Activated CD4-positive, alpha-beta T cell treated with anti-CD3 and anti-CD28 coated beads for 36 hours (primary cell): ENCODE measurements at regions of chr6 and their contacts with region 1.

Region 1: GRCh38 chr6:127855542-127856159 is 45.2 kb downstream of the THEMIS start:
- DNase-seq: peak; percentile 68
- ATAC-seq: peak; percentile 60
- H3K4me3 Mint-ChIP-seq: peak overlapping the region; percentile 39
- H3K27ac Mint-ChIP-seq: peak overlapping the region; percentile 69
- H3K4me1 Mint-ChIP-seq: peaks cover 70% of the 10 kb centered on the region
- H3K27me3 Mint-ChIP-seq: no peaks in the 10 kb centered on the region

Region 2: DNA sequence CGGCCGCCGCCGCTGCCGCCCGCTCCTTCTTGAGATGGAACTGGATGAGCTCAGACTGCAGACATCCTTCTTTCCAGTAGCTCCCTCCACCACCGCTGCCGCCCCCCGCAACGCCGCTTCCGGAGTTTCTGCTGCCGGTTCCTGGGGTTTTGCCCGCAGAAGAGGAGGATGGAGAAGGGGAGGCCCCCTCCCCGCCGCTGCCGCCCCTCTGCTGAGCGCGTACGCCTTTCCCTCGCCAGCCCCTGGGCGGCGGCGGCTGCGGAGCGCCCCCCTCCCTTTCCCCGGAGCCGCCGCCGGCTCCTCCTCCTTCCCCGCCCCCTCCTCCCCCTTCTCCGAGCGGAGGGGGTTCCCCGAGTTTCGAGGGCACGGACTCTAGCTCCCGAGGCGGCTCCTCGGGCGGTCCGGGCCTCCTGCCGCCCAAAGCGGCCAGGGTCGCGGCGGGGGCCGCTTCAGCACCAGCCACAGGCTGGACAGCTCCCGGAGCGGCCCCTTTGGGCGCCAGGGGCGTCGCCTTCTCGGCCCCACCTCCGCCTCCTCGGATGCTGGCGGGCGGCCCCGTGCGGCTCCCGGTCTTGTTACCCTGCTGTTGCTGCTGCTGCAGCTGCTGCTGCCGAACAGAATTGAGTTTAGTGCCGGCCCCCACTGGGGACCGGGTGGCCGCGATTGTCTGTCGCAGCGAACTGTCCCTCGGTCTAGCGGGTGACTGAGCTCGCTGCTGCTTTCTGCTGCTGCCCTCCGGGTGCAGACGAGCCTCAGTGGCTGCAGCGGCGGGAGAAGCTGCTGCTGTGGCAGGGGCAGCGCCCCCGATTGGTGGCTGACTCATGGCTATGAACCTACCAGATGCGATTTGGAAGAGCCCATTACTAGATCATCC is 339.6 kb before region 1 on chr6:
- CTCF ChIA-PET with region 1: no interaction called
- POLR2A ChIA-PET with region 1: no interaction called
- intact Hi-C with region 1: no loop called
- DNase-seq: peak; percentile 79
- ATAC-seq: peak; percentile 73
- H3K4me3 Mint-ChIP-seq: peak overlapping the region; percentile 87
- H3K27ac Mint-ChIP-seq: peak overlapping the region; percentile 58
- H3K4me1 Mint-ChIP-seq: peaks cover 40% of the 10 kb centered on the region
- H3K27me3 Mint-ChIP-seq: peaks cover 43% of the 10 kb centered on the region

Region 3: GRCh38 chr6:127554435-127555006 is 301.1 kb before region 1 on chr6:
- CTCF ChIA-PET with region 1: no interaction called
- POLR2A ChIA-PET with region 1: no interaction called
- intact Hi-C with region 1: no loop called
- DNase-seq: peak; percentile 36
- ATAC-seq: peak; percentile 42
- H3K4me3 Mint-ChIP-seq: no peak overlapping the region
- H3K27ac Mint-ChIP-seq: no peak overlapping the region
- H3K4me1 Mint-ChIP-seq: no peaks in the 10 kb centered on the region
- H3K27me3 Mint-ChIP-seq: peaks cover 26% of the 10 kb centered on the region

Region 4: DNA sequence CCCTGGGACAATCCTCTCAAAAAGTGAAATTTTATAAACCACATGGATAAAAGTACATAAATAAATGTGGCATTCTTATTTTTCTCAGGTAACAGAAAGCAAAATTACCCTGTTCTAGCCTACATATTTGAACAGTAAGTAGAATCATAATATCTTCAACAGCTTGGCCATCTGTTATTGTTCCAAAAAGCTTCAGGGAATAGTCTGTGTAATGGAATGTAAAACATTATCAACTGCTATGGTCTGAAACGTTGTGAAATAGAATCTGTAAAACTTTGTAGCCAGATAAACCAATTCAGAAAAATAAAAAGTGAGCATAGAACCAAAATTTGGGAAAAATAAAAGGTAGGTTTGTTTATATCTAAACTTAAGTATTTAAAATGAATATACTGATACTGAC is 69.5 kb before region 1 on chr6:
- CTCF ChIA-PET with region 1: interaction called, 12 read pairs
- POLR2A ChIA-PET with region 1: no interaction called
- intact Hi-C with region 1: no loop called
- DNase-seq: no peak
- ATAC-seq: no peak
- H3K4me3 Mint-ChIP-seq: no peak overlapping the region
- H3K27ac Mint-ChIP-seq: no peak overlapping the region
- H3K4me1 Mint-ChIP-seq: peaks cover 75% of the 10 kb centered on the region
- H3K27me3 Mint-ChIP-seq: no peaks in the 10 kb centered on the region

Region 5: DNA sequence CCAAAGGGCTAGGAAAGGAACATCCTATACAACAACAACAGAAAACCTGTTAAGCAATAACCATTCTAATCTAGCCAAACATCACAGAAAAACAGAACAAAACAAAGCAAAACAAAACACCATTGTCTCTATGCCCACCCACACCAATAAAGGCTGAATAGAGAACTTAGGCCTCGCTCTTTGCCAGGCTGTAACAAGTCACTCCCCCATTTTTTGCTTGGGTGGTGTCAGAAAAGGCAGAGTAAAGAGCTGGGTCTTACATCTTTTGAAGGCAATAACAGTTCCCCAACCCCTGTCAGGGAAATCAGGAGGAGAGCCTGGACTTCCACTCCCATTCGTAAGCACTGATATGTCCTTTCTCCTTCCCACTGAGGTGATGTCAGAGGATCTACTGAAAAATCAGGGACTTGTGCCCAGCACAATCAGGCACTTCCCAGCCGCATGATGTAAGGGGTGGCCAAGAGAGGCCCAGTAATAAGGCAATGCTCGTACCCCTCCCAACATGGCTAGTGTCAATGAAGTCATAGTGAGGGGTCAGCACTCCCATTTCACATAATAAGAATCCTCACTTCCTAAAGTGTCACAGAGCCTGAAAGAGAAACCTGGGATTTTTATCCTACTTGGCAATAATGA is 14.2 kb after region 1 on chr6:
- CTCF ChIA-PET with region 1: interaction called, 34 read pairs
- POLR2A ChIA-PET with region 1: interaction called, 3 read pairs
- intact Hi-C with region 1: no loop called
- DNase-seq: no peak
- ATAC-seq: peak; percentile 45
- H3K4me3 Mint-ChIP-seq: peak overlapping the region; percentile 3
- H3K27ac Mint-ChIP-seq: peak overlapping the region; percentile 74
- H3K4me1 Mint-ChIP-seq: peaks cover 56% of the 10 kb centered on the region
- H3K27me3 Mint-ChIP-seq: no peaks in the 10 kb centered on the region

Region 6: DNA sequence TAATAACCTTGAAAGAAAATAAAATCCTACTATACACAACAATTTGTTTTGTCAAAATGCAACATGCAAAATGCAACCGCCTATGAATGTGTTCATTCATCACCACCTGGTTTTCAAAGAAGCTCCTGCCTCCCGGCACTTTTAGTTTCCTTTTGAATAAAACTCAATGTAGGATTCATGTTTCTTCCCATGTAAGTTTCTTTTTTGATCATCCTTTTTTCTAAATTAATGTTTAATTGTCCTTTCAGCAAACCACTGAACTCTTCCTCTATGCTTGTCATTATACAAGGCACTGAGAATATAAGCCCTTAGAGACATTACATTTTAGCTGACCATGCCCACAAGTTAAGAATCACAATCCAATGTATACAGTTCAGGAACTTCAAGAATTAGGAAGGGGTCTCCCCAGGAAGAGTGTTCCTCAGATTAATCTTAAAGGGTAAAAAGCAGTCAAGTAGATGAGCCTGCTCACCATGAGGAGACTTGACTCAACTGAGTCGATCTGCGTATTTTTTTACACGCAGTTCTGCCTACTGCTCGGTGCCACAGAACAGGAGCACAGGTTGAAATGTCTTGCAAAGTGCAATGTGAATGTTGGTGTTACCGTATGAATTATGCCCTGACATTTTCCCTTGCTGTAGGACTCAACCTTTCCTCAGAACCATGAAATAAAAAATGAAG is 52.4 kb after region 1 on chr6:
- CTCF ChIA-PET with region 1: interaction called, 15 read pairs
- POLR2A ChIA-PET with region 1: no interaction called
- intact Hi-C with region 1: no loop called
- DNase-seq: peak; percentile 61
- ATAC-seq: peak; percentile 83
- H3K4me3 Mint-ChIP-seq: peak overlapping the region; percentile 61
- H3K27ac Mint-ChIP-seq: peak overlapping the region; percentile 84
- H3K4me1 Mint-ChIP-seq: peaks cover 55% of the 10 kb centered on the region
- H3K27me3 Mint-ChIP-seq: no peaks in the 10 kb centered on the region

Region 7: DNA sequence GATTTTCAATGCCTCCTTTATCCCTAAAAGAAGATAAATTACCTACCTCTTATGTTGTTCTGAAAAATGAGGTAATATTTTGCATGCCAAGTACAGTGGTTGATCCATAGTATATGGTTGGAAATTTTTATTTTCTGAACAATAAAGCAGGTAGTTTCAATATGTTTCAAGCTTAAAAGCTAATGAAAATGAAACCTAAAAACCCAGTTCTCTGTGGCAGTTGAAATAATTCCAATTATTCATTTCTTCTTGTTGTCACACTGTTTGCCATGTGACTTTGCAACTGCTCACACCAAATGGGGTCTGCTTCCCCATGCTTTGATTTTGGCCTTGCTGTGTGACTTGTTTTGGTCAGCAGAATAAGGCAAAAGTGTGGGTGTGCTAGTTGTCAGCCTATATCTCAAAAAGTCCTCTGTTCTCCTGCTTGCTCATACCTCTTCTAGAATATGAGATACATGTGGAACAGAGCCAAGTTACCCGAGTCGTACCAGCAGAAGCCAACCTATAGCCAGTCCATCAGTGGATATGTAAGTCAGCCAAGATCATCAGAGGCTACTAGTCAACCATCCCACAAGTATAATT is 242.4 kb after region 1 on chr6:
- CTCF ChIA-PET with region 1: interaction called, 7 read pairs
- POLR2A ChIA-PET with region 1: no interaction called
- intact Hi-C with region 1: loop called (anchors 10 kb)
- DNase-seq: peak; percentile 19
- ATAC-seq: peak; percentile 75
- H3K4me3 Mint-ChIP-seq: no peak overlapping the region
- H3K27ac Mint-ChIP-seq: no peak overlapping the region
- H3K4me1 Mint-ChIP-seq: peaks cover 16% of the 10 kb centered on the region
- H3K27me3 Mint-ChIP-seq: no peaks in the 10 kb centered on the region

Region 8: DNA sequence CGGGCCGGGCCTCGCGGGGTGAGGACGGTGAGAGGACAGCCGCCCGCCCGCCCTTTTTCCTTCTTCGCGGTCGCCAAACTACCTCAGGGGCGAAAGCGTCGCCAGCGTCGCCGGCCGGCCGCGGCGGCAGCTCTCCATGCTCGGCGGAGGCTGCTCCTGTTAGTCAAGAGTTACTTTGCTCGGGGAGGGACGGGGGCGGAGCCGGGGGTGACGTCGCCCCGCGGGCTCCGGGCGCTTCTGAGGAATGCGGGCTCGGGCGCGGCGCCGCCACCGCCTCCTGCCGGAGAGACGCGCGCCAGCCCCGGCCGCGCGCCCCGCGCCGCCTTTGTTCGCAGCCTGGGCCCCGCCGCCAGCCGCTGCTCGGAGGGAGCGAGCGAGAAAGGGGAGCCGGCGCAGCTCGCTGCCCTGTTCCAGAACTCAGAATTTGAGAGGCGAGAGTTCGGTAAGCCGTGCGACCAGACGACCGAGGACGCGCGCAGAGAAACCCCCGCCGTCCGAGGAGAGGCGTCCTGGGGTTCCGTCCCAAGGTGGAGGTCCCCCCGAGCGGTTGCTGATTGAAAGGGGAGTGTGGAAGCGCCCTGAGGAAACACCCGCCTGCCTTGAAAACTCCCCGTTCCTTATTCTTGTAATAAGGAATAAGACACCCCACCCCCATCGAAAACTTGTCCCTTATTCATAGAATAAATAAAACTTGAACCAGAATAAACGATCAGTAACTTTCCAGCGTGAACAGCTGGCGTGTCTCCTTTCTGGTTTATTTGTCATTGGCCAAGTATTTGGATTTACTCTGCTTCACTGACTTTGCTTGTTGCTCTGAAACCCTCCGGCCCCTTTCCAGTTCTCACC is 665.0 kb after region 1 on chr6 and contains the start of gene PTPRK:
- CTCF ChIA-PET with region 1: interaction called, 6 read pairs
- POLR2A ChIA-PET with region 1: no interaction called
- intact Hi-C with region 1: loop called (anchors 5 kb)
- DNase-seq: peak; percentile 94
- ATAC-seq: peak; percentile 92
- H3K4me3 Mint-ChIP-seq: peak within 1 kb of the TSS; percentile 90
- H3K27ac Mint-ChIP-seq: peak within 1 kb of the TSS; percentile 66
- H3K4me1 Mint-ChIP-seq: peaks cover 18% of the 10 kb centered on the region
- H3K27me3 Mint-ChIP-seq: peaks cover 31% of the 10 kb centered on the region
- total RNA-seq, gene PTPRK: 4.1 to 5.0 TPM